ENCODE measurements at regions of chr5 and their contacts with region 1.

Region 1: GRCh38 chr5:81301271-81302015 is at the start of gene ZCCHC9:
- DNase-seq: peak; percentile 89
- H3K4me3 ChIP-seq: peak within 1 kb of the TSS; percentile 85
- H3K27ac ChIP-seq: peak within 1 kb of the TSS; percentile 92 to 94
- H3K4me1 ChIP-seq: peaks cover 10% of the 10 kb centered on the region
- H3K27me3 ChIP-seq: no peaks in the 10 kb centered on the region
- CTCF ChIP-seq: peak in 3 of 4 experiments; percentile 24 to 54 (median 53)
- POLR2A ChIP-seq: peak; percentile 74
- total RNA-seq, gene ZCCHC9: 19.4 to 30.1 TPM

Region 2: GRCh38 chr5:80686757-80687156 is 614.7 kb before region 1 on chr5:
- intact Hi-C with region 1: loop called (anchors 10 kb)
- DNase-seq: no peak
- H3K4me3 ChIP-seq: no peak overlapping the region
- H3K27ac ChIP-seq: no peak overlapping the region
- H3K4me1 ChIP-seq: no peaks in the 10 kb centered on the region
- H3K27me3 ChIP-seq: no peaks in the 10 kb centered on the region
- CTCF ChIP-seq: peak in 3 of 4 experiments; percentile 28 to 59 (median 52)
- POLR2A ChIP-seq: no peak

Region 3: DNA sequence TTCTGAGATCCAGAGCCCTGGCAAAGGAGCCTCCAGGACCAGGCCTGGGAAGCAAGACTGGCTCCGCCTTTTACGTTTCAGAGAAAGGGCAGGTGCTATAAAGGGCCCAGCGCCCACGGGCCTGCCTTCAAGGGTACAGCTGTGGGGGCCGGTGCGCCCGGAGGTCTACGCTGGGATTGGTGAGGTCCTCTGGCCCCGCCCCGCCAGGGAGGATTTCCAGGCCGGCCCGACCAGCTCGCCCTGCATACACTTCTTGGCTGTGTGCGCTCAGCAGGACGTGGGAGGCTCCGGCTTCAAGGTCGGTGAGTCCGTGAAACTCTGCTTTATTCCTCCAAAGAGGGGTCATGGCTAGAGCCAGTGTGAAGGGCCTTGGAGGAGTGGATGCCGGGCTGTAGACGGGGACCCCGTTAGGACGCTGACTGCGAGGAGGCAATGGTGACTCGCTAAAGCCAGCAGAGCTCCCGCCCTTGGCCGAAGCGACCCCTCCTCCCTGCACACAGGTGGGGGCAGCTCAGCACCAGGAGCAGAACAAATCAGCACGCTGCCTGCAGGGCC is 68.3 kb before region 1 on chr5 and contains the start of gene CKMT2:
- intact Hi-C with region 1: loop called (anchors 5 kb)
- DNase-seq: peak; percentile 49
- H3K4me3 ChIP-seq: peak within 1 kb of the TSS; percentile 20 to 32
- H3K27ac ChIP-seq: peak within 1 kb of the TSS; percentile 13 to 67
- H3K4me1 ChIP-seq: no peaks in the 10 kb centered on the region
- H3K27me3 ChIP-seq: no peaks in the 10 kb centered on the region
- CTCF ChIP-seq: no peak
- POLR2A ChIP-seq: no peak
- total RNA-seq, gene CKMT2: 9.8 to 25.4 TPM

Region 4: DNA sequence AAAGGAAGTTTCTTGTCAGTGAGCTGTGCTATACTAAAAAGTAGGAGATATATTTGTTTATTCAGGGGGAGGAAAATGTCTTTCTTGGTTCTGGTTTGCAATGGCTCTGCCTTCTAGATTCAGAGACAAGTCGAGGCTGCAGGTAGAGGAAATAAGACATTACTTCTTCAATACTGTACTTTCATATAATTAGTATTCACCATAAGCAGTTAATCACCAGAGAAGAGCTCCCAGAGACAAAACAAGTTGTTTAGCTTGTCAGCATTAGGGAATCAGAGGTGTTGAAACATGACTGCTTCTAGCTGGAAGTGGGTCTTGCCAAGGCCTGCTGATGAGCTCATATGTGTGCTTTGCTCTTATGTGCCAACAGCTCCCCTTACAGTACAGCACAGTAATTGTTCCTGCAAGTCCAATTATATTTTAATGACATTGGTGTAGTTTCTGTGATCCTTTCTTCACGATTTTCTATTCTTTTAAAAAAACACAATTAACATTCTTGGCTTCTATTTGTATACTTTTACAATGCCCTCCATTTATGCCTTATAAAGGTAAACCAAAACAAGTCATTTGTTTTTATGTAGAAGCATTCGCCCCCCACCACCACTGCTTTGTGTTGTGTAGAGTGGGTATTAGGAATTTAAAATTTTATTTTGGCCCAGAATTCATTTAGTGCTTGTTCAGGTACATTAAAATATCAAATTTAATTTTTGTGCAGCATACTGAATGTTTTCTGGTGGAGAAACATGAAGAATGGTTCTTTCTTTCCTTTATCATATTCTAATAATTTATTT is 864.5 kb after region 1 on chr5:
- intact Hi-C with region 1: loop called (anchors 5 kb)
- DNase-seq: peak; percentile 78
- H3K4me3 ChIP-seq: no peak overlapping the region
- H3K27ac ChIP-seq: peak overlapping the region; percentile 37 to 39
- H3K4me1 ChIP-seq: peaks cover 5% of the 10 kb centered on the region
- H3K27me3 ChIP-seq: no peaks in the 10 kb centered on the region
- CTCF ChIP-seq: peak in 3 of 4 experiments; percentile 71 to 84 (median 81)
- POLR2A ChIP-seq: no peak